BJ (cell line): ENCODE measurements at regions of chr12 and their contacts with region 1.

Region 1: DNA sequence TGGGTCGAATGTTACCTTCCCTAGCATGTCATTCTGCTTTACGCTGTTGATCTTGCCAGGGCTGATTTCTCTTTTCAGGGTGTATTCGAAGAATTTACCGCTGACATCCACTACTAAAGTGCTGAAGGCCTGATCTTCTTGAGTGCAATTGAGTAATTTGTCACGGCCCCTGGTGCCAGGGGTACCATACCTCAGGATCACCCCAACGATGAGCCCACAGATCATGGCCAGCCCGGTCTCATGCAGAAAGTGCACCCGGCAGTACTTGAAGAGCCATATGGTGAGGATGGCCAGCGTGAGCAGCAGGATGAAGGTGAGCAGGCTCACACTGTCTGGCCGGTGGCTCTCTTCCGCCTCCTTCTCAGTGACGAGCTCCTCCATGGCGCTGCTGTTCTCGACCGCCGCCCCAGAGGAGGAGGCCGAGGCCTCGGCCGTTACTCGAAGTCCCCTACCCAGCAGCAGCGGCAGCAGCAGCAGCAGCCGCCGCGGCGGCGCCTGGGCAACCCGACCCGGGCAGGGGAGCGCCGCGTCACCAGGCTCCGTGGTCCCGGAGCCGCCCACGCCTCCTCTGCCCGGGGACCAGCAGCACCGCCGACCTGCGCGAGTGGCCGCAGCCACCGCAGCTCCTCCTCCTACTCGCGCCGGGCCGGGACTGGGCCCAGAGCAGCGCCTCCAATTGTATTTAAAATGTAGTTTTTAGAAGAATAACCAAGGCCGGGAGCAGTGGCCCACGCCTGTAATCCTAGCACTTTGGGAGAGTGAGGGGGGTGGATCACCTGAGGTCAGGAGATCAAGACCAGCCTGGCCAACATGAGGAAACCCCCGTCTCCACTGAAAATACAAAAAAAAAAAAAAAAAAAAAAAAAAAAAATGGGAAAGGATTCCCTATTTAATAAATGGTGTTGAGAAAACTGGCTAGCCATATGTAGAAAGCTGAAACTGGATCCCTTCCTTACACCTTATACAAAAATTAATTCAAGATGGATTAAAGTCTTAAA is 58.5 kb upstream of the TMPO start:
- DNase-seq: no peak
- H3K4me3 ChIP-seq: peak overlapping the region; percentile 35
- H3K27me3 ChIP-seq: no peaks in the 10 kb centered on the region
- CTCF ChIP-seq: no peak

Region 2: DNA sequence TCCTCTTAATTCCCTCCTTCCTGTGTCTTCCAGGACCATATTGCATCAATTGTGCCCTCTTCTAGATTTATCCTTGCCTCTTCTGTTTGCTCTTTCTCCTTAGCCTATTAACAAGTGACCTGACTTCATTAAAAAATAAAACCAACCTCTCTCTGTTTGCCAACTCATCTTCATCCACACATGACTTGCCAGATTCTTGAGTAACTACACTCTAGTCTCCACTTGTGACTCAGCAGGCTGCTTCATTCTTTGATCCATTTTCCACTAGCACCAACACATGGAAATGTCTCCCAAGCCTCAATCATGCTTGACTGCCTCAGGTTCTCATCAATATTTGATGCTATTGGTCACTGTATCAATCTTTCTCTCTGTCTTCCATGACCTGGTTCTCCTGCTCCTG is 433.9 kb before region 1 on chr12:
- CTCF ChIA-PET with region 1: no interaction called
- POLR2A ChIA-PET with region 1: no interaction called
- DNase-seq: no peak
- H3K4me3 ChIP-seq: no peak overlapping the region
- H3K27me3 ChIP-seq: no peaks in the 10 kb centered on the region
- CTCF ChIP-seq: no peak

Region 3: GRCh38 chr12:98470469-98471082 is 13.7 kb after region 1 on chr12:
- CTCF ChIA-PET with region 1: interaction called, 7 read pairs
- POLR2A ChIA-PET with region 1: interaction called, 10 read pairs
- DNase-seq: no peak
- H3K4me3 ChIP-seq: no peak overlapping the region
- H3K27me3 ChIP-seq: peaks cover 1% of the 10 kb centered on the region
- CTCF ChIP-seq: no peak

Region 4: DNA sequence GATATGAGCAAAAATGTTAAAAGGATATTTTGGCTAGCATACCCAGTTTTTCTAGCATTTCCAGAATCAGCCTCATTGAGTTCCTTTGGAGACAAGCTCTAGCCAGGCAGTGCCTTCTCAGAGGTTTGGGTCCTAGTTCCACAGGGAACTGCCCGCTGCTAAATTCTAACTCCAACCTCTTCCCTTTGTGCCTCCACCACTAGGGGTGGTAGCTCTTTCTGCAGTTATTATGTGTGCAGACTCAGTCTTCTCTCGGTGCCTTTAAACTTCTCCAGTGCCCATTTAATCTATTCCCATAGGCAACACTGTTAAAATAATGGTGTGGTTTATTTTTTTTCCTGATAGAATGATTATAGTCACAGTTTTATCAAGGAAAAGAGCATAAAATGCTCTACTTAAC is 115.1 kb after region 1 on chr12:
- CTCF ChIA-PET with region 1: no interaction called
- POLR2A ChIA-PET with region 1: no interaction called
- DNase-seq: no peak
- H3K4me3 ChIP-seq: no peak overlapping the region
- H3K27me3 ChIP-seq: no peaks in the 10 kb centered on the region
- CTCF ChIP-seq: no peak; the same call in 1 of the 2 replicates